Upper lobe of right lung (tissue), 1 donor: ENCODE measurements at regions of chr15 and their contacts with region 1.

Region 1: GRCh38 chr15:41989934-41990605 is 17.7 kb upstream of the EHD4 start:
- DNase-seq: peak; percentile 47
- ATAC-seq: no peak
- H3K4me3 ChIP-seq: no peak overlapping the region
- H3K27ac ChIP-seq: no peak overlapping the region
- H3K4me1 ChIP-seq: peaks cover 5% of the 10 kb centered on the region
- H3K27me3 ChIP-seq: no peaks in the 10 kb centered on the region
- CTCF ChIP-seq: no peak

Region 2: DNA sequence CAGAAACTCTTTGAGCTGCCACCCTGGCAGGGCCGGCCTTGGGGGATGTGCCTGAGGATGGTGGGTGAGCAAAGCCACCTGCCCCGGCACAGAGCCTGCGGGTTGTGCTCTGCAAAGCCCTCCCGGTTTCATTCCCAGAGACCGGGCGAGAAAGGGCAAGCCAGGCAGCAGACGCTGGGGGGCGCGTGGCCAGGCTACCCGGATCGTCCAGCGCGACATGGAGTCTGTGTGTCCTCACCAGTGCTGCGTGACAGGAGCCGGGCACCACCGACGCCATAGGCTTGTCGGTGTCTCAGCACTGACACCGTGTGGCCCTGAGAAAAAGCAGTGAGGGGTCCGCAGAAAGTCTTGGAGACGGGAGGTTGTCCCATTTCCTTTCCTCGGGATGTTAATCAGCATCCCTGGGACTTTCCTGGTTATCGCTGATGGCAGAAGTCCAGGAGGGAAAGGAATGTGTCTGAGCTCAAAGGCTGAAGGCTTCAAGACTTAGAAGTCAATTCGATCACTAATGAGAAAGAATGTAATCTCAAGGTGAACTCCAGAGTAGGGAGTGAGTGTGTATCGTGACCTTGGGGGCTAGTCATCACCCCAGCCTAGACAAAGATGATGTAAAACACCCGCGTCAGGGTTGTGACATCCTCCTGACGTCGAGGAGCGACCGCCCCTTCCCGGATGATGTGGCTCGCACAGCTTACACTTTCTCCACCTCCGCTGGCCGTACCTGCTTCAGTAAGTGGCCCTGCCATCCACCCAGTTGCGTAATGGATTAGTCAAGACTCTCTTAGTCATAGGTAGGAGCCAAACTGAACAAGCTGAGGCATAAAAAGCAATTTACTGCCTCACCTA is 67.1 kb after region 1 on chr15:
- intact Hi-C with region 1: loop called (anchors 5 kb)
- DNase-seq: peak; percentile 92
- ATAC-seq: peak; percentile 88
- H3K4me3 ChIP-seq: peak overlapping the region; percentile 12
- H3K27ac ChIP-seq: peak overlapping the region; percentile 77
- H3K4me1 ChIP-seq: peaks cover 13% of the 10 kb centered on the region
- H3K27me3 ChIP-seq: no peaks in the 10 kb centered on the region
- CTCF ChIP-seq: peak; percentile 61